ENCODE measurements at regions of chr14 and their contacts with region 1.

Region 1: DNA sequence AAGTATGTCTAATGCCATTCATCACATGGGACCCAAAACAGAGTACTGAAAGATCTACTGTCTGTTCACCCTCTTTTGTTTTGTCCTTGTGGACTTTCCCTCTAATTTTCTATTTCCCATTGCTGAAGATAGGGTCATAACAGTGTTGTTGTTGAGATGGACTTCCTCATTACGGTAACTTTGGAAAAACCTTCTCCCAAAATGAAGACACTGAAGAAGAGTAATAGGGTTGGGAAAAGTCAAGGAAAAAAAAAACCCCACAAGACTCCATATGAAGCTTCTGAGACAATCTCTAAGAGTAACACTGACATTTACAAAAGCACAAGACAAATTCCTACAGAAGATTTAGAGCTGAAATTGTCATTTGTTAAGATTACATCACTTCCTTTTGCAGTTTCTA is 36.7 kb downstream of the EXOC5 start:
- DNase-seq: no peak
- H3K4me3 Mint-ChIP-seq: no peak overlapping the region
- H3K27ac Mint-ChIP-seq: no peak overlapping the region
- H3K4me1 Mint-ChIP-seq: peaks cover 4% of the 10 kb centered on the region
- H3K27me3 Mint-ChIP-seq: no peaks in the 10 kb centered on the region

Region 2: GRCh38 chr14:57293866-57294837 is 62.1 kb after region 1 on chr14:
- intact Hi-C with region 1: loop called (anchors 10 kb)
- DNase-seq: no peak
- H3K4me3 Mint-ChIP-seq: no peak overlapping the region
- H3K27ac Mint-ChIP-seq: no peak overlapping the region
- H3K4me1 Mint-ChIP-seq: no peaks in the 10 kb centered on the region
- H3K27me3 Mint-ChIP-seq: no peaks in the 10 kb centered on the region

Measured in activated CD4-positive, alpha-beta T cell treated with anti-CD3 and anti-CD28 coated beads, Interleukin-2, amount 10 ng/mL, durations not matched to agents 24 days and 14 days (primary cell).